ENCODE measurements at regions of chrX and their contacts with region 1.

Region 1: DNA sequence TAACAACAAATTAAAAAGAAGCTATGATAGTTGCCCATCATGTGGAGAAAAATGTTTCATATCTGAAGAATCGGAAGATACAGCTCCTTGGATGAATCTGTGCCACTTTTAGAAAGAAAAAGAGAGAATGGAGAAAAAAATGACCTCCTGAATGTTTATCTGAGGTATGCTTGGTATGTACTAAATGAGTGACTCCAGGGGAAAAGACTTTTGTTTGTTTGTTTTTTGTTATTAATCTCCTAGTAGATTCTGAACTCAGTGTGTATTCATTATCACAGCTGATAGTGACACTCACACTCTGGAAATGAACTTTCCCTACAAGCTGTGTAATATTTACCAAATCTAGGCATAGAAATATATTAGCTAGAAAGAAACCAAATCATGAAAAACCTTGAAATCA is 97.4 kb upstream of the MAGEB2 start:
- DNase-seq: no peak
- H3K4me3 ChIP-seq: no peak overlapping the region
- H3K27ac ChIP-seq: no peak overlapping the region
- H3K4me1 ChIP-seq: no peaks in the 10 kb centered on the region
- H3K27me3 ChIP-seq: no peaks in the 10 kb centered on the region
- CTCF ChIP-seq: no peak
- POLR2A ChIP-seq: no peak

Region 2: DNA sequence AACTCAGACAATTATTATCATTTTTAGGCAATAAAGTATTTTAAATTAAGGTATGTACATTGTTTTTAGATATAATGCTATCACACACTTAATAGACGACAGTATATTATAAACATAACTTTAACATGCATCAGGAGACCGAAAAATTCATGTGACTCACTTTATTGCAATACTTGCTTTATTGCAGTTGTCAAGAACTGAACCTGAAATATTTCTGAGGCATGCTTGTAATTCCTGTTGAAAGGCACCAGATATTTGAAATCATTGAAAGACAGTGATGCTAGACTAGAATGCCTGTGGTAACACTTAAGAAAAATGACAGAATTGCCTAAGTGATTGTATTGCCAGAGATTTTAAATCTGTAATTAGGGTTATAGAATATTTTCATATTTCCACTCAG is 78.2 kb before region 1 on chrX:
- CTCF ChIA-PET with region 1: no interaction called
- POLR2A ChIA-PET with region 1: no interaction called
- dilution Hi-C with region 1: no loop called
- intact Hi-C with region 1: no loop called
- DNase-seq: no peak
- H3K4me3 ChIP-seq: no peak overlapping the region
- H3K27ac ChIP-seq: no peak overlapping the region
- H3K4me1 ChIP-seq: no peaks in the 10 kb centered on the region
- H3K27me3 ChIP-seq: no peaks in the 10 kb centered on the region
- CTCF ChIP-seq: no peak
- POLR2A ChIP-seq: no peak

Region 3: DNA sequence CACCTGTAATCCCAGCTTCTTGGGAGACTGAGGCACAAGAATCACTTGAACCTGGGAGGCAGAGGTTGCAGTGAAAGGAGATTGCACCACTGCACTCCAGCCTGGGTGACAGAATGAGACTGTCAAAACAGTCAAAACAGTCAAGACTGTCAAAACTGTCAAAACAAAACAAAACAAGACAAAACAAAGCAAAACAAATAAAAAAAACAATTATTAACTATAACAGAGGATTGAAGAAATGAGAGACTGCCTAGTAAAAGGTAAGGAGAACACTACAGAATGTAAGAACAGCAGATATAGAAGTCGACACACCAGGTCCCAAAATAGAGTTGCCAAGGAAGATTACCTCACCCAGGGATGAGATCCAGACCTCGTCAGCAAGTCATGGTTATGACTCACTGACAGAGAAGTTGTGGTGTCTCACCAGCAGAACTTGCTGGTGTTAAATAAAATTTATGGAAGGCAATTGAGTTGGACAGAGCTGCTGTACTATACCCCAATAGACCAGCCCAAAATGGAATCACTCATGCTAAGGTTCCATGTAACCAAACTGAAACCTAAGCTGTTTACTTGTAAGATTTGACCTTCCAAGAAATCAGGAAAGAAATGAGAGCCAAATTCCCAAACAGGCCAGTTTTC is 503.1 kb after region 1 on chrX:
- CTCF ChIA-PET with region 1: no interaction called
- POLR2A ChIA-PET with region 1: no interaction called
- dilution Hi-C with region 1: no loop called
- intact Hi-C with region 1: loop called (anchors 10 kb)
- DNase-seq: no peak
- H3K4me3 ChIP-seq: no peak overlapping the region
- H3K27ac ChIP-seq: no peak overlapping the region
- H3K4me1 ChIP-seq: no peaks in the 10 kb centered on the region
- H3K27me3 ChIP-seq: no peaks in the 10 kb centered on the region
- CTCF ChIP-seq: no peak
- POLR2A ChIP-seq: no peak